MCF 10A (cell line): ENCODE measurements at regions of chr6 and their contacts with region 1.

Region 1: GRCh38 chr6:47787620-47788497 is 6.0 kb downstream of the OPN5 start:
- DNase-seq: peak; percentile 77
- H3K4me3 Mint-ChIP-seq: peak overlapping the region; percentile 52
- H3K27ac Mint-ChIP-seq: peak overlapping the region; percentile 76
- H3K4me1 Mint-ChIP-seq: peaks cover 16% of the 10 kb centered on the region
- H3K27me3 Mint-ChIP-seq: no peaks in the 10 kb centered on the region
- CTCF ChIP-seq: peak; percentile 97

Region 2: DNA sequence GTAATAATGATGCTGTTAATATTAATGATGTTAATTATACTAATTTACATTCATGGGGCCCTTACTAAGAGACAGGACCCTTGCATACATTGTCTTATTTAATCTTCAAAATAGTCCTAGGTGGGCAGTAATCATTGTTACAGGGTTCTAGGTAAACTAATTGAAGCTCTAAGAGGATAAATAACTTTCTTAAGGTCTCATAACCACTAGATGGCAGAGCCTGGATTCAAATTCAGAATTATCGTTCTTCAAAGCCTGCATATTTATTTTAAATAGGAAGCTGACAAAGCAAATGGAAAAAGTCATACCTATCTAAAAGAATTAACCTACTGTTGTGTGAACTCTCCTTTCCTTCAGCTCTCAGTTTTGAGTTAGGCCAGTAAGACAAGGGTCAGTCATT is 299.6 kb after region 1 on chr6:
- CTCF ChIA-PET with region 1: interaction called, 6 read pairs
- POLR2A ChIA-PET with region 1: no interaction called
- intact Hi-C with region 1: loop called (anchors 2 kb)
- DNase-seq: peak; percentile 43
- H3K4me3 Mint-ChIP-seq: no peak overlapping the region
- H3K27ac Mint-ChIP-seq: no peak overlapping the region
- H3K4me1 Mint-ChIP-seq: no peaks in the 10 kb centered on the region
- H3K27me3 Mint-ChIP-seq: no peaks in the 10 kb centered on the region
- CTCF ChIP-seq: peak; percentile 42

Region 3: DNA sequence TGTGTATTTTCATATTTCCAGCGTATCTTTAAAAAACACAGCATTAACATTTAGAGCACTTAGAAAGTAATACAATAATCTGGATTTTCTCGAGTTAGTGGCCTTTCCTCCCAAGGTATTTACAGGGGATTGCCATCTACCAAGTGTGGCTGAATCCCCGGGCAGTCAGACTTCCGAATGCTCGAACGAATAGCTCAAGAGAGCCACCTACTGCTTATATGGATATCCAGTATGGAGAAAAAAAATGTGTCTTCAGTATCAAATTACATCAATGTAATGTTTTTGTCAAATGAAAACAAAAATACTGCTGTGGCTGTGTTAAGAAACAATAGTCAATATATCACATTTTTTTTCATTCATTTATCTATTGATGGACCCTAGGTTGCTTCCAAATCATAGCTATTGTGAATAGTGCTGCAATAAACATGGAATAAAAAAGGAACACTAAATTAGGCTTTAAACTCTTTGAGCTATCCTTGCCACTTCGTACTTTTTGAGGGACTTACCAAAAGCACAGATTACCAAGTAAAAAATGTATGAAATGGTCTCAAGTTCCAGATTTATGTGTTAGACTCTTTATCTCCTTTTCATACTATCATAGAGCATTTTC is 977.6 kb after region 1 on chr6:
- CTCF ChIA-PET with region 1: interaction called, 32 read pairs
- POLR2A ChIA-PET with region 1: interaction called, 14 read pairs
- intact Hi-C with region 1: loop called (anchors 1 kb)
- DNase-seq: peak; percentile 74
- H3K4me3 Mint-ChIP-seq: no peak overlapping the region
- H3K27ac Mint-ChIP-seq: peak overlapping the region; percentile 39
- H3K4me1 Mint-ChIP-seq: peaks cover 19% of the 10 kb centered on the region
- H3K27me3 Mint-ChIP-seq: no peaks in the 10 kb centered on the region
- CTCF ChIP-seq: peak; percentile 51

Region 4: DNA sequence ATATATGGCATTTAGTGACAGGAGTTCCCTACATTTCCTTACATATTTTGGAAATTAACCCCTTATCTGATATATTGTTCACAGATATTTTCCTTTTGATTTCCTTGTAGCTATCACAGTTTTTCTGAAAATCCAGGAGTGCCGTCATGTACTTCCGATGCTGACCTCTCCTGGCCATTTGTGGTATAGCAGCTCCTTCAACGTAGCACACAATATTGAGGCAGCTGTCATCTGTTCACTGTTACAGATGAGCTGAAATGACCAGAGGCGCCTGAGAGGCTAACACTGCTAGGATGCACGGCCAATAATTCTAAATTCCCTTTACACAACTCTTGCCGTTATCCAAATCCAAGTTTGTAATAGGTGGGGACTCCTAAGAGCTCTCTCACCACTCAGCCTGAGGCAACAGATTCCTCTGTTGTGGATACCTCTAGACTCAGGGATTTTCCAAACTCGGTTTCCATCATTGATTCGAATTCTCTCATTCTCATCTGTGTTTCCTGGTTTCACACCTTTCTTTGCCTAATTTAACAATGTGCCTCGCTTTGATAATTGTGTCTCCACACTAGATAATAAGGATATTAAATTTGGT is 1622.2 kb after region 1 on chr6:
- CTCF ChIA-PET with region 1: interaction called, 47 read pairs
- POLR2A ChIA-PET with region 1: interaction called, 8 read pairs
- intact Hi-C with region 1: loop called (anchors 1 kb)
- DNase-seq: peak; percentile 76
- H3K4me3 Mint-ChIP-seq: no peak overlapping the region
- H3K27ac Mint-ChIP-seq: no peak overlapping the region
- H3K4me1 Mint-ChIP-seq: no peaks in the 10 kb centered on the region
- H3K27me3 Mint-ChIP-seq: no peaks in the 10 kb centered on the region
- CTCF ChIP-seq: peak; percentile 83